ENCODE measurements at regions of chr4 and their contacts with region 1.

Region 1: DNA sequence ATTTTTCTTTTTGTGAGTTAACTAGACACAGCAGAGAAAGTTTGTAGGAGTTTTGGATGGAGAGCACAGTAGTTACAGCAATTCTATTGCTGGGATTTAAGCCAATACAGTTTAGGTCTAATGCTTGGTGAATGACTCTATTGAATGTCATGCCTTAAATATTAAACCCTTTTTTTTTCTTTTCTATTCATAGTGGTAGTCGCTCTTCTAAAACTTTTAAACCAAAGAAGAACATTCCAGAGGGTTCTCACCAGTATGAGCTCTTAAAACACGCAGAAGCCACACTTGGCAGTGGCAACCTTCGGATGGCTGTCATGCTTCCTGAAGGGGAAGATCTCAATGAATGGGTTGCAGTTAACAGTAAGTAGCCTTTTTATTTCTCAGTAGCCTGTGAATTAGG is 34.8 kb upstream of the DCK start:
- DNase-seq: peak; percentile 89
- ATAC-seq: peak; percentile 96
- H3K4me3 ChIP-seq: no peak overlapping the region
- H3K27ac ChIP-seq: 0 out of 2 replicates have a peak overlapping the region, but pooled peaks have one; percentile 15
- H3K4me1 ChIP-seq: peaks cover 10% of the 10 kb centered on the region
- H3K27me3 ChIP-seq: no peaks in the 10 kb centered on the region
- CTCF ChIP-seq: no peak
- POLR2A ChIP-seq: no peak
- RAD21 ChIP-seq: peak; percentile 8; the same call in 1 of the 2 replicates

Region 2: DNA sequence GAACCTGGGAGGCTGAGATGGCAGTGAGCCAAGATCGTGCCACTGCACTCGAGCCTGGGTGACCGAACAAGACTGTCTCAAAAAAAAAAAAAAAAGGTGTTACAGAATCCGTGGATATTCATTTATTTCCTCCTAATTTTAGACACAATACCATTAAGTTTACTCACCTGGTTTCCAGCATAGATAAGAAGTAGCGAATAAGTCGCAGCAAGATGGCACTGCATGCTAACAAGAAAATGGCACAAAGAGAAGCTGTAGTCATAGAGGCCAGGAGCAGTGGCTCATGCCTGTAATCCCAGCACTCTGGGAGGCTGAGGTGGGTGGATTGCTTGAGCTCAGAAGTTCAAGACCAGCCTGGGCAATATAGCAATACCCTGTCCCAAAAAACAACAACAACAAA is 73.5 kb before region 1 on chr4:
- CTCF ChIA-PET with region 1: no interaction called
- POLR2A ChIA-PET with region 1: interaction called, 20 read pairs
- dilution Hi-C with region 1: no loop called
- in situ Hi-C with region 1: no loop called
- intact Hi-C with region 1: no loop called
- DNase-seq: no peak
- ATAC-seq: no peak
- H3K4me3 ChIP-seq: no peak overlapping the region
- H3K27ac ChIP-seq: no peak overlapping the region
- H3K4me1 ChIP-seq: no peaks in the 10 kb centered on the region
- H3K27me3 ChIP-seq: no peaks in the 10 kb centered on the region
- CTCF ChIP-seq: no peak
- POLR2A ChIP-seq: no peak
- RAD21 ChIP-seq: no peak

Region 3: GRCh38 chr4:70901984-70902576 is 56.6 kb before region 1 on chr4 and contains the start of gene MOB1B:
- CTCF ChIA-PET with region 1: no interaction called
- POLR2A ChIA-PET with region 1: no interaction called
- dilution Hi-C with region 1: no loop called
- in situ Hi-C with region 1: no loop called
- intact Hi-C with region 1: loop called (anchors 5 kb)
- DNase-seq: peak; percentile 88
- ATAC-seq: peak; percentile 96
- H3K4me3 ChIP-seq: peak within 1 kb of the TSS; percentile 83
- H3K27ac ChIP-seq: peak within 1 kb of the TSS; percentile 88
- H3K4me1 ChIP-seq: 0 out of 2 replicates have a peak, but pooled peaks cover 1% of the 10 kb centered on the region
- H3K27me3 ChIP-seq: no peaks in the 10 kb centered on the region
- CTCF ChIP-seq: peak; percentile 45
- POLR2A ChIP-seq: peak; percentile 78
- RAD21 ChIP-seq: peak; percentile 43; the same call in 1 of the 2 replicates
- total RNA-seq, gene MOB1B: 5.7 and 15.0 TPM in 2 replicates

Region 4: DNA sequence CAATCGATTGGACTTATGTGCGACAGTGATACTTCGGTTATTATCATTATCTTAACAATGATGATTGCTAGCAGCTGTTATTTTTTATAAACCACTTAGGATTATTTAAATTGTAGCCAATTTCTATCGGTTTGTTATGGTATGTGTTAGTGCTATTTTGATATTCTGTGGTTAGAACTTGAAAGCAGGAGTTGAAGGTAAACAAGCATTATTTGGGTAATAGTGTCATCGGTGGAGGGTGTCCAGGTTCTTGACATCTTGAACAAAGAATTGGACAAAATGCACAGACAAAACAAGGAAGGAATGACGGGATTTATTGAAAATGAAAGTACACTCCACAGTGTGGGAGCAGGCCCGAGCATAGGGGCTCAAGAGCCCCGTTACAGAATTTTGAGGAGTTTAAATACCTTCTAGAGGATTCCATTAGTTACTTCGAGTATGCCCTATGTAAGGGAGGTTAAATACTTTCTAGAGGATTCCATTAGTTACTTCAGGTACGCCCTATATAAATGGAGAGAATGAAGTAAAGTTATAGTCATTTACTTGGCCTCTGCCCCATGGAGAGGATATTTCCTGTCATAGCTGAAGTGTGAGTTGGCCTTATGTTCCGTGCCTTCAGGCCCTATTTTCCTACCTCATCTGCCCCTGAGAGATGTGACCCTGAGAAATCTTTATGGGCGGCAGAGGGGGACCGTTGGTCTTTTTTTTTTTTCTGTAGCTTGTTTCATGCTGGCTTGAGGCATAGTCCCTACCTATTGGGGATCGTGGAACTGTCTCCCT is 43.5 kb before region 1 on chr4:
- CTCF ChIA-PET with region 1: interaction called, 5 read pairs
- POLR2A ChIA-PET with region 1: no interaction called
- dilution Hi-C with region 1: no loop called
- in situ Hi-C with region 1: no loop called
- intact Hi-C with region 1: loop called (anchors 2 kb)
- DNase-seq: peak; percentile 78
- ATAC-seq: peak; percentile 53
- H3K4me3 ChIP-seq: peak overlapping the region; percentile 33; the same call in 1 of the 2 replicates
- H3K27ac ChIP-seq: peak overlapping the region; percentile 88
- H3K4me1 ChIP-seq: peaks cover 6% of the 10 kb centered on the region
- H3K27me3 ChIP-seq: no peaks in the 10 kb centered on the region
- CTCF ChIP-seq: no peak
- POLR2A ChIP-seq: no peak
- RAD21 ChIP-seq: no peak

Region 5: DNA sequence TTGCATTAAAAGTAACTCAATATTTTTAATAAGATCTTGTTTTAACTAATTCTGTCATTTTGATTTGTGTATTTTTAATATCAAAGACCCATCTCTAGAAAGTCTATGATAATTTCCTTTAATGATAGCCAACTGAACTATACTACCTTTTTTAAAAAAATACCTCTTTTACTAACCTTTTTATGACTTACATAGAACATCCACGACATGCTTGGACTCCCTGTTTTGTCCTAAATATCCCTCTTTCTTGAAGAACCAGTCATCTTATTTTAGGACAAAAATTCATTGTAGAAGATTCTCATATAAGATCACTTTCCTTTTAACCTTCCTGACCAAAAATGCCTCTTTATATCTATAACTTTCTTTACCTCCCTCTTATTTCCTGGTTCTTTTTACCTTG is 902.0 kb after region 1 on chr4:
- CTCF ChIA-PET with region 1: no interaction called
- POLR2A ChIA-PET with region 1: no interaction called
- dilution Hi-C with region 1: no loop called
- in situ Hi-C with region 1: no loop called
- intact Hi-C with region 1: no loop called
- DNase-seq: no peak
- ATAC-seq: no peak
- H3K4me3 ChIP-seq: no peak overlapping the region
- H3K27ac ChIP-seq: no peak overlapping the region
- H3K4me1 ChIP-seq: no peaks in the 10 kb centered on the region
- H3K27me3 ChIP-seq: no peaks in the 10 kb centered on the region
- CTCF ChIP-seq: no peak
- POLR2A ChIP-seq: no peak
- RAD21 ChIP-seq: no peak

Measured in IMR-90 (cell line).